ENCODE measurements at regions of chr12 and their contacts with region 1.

Region 1: GRCh38 chr12:50074936-50075807 is 10.0 kb upstream of the SMARCD1 start:
- DNase-seq: peak; percentile 67 to 77 (median 72)
- H3K4me3 ChIP-seq: no peak overlapping the region
- H3K4me3 Mint-ChIP-seq: no peak overlapping the region
- H3K27ac ChIP-seq: no peak overlapping the region
- H3K27ac Mint-ChIP-seq: peak overlapping the region in 2 of 7 donors; percentile 64 to 79
- H3K4me1 ChIP-seq: peaks cover 3% of the 10 kb centered on the region
- H3K4me1 Mint-ChIP-seq: peaks cover 5 to 11% (median 7%) of the 10 kb centered on the region in 4 donors
- H3K27me3 ChIP-seq: no peaks in the 10 kb centered on the region
- H3K27me3 Mint-ChIP-seq: peaks cover 0 to 5% of the 10 kb centered on the region in 2 donors

Region 2: DNA sequence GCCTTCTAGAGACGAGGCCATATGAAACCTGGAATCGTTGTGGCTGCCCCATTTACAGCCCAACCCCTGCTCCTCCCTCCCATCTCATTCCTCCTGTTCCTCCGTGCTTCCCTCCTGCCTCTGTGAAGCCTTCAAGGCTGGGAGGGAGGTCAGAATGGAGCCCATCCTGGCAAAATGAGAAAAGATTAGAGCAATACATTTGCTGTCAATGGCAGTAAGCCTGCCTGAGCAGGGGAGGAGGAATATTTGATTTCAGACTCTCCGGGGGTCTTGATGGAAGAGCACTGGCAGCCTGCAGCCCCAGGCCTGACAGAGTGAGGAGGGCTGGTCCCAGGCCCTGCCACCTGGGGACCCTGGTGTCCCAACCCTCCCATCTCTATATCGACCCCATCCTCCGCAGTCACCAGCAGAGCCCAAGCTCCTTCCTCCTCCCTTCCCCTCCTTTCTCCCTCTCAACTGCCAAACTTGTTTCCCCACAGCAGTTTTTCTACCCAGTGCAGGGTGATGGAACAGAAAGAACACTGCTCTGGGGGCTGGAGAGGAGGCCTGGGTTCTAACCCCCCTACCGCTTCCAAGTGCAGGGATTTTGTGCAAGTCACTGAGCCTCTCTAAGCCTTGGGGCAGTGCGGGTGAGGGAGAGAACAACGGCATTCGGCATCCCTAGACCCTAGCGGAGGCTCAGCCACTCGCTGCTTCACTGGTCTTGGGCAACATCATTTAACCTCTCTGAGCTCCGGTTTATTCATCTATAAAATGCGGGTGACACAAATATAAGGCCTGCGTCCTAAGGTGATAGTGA is 33.9 kb before region 1 on chr12:
- CTCF ChIA-PET with region 1: interaction called, 54 read pairs
- POLR2A ChIA-PET with region 1: no interaction called
- intact Hi-C with region 1: no loop called
- DNase-seq: no peak
- H3K4me3 ChIP-seq: no peak overlapping the region
- H3K4me3 Mint-ChIP-seq: no peak overlapping the region
- H3K27ac ChIP-seq: no peak overlapping the region
- H3K27ac Mint-ChIP-seq: no peak overlapping the region
- H3K4me1 ChIP-seq: no peaks in the 10 kb centered on the region
- H3K4me1 Mint-ChIP-seq: peaks cover 0 to 1% (median 0%) of the 10 kb centered on the region in 4 donors
- H3K27me3 ChIP-seq: no peaks in the 10 kb centered on the region
- H3K27me3 Mint-ChIP-seq: peaks cover 2 to 4% of the 10 kb centered on the region in 2 donors

Region 3: GRCh38 chr12:50055831-50056638 is 19.1 kb before region 1 on chr12:
- CTCF ChIA-PET with region 1: interaction called, 21 read pairs
- POLR2A ChIA-PET with region 1: no interaction called
- intact Hi-C with region 1: no loop called
- DNase-seq: peak; percentile 51 to 60 (median 54)
- H3K4me3 ChIP-seq: peak overlapping the region in 1 of 2 donors; percentile 15
- H3K4me3 Mint-ChIP-seq: peak overlapping the region; percentile 43 to 94 (median 77)
- H3K27ac ChIP-seq: no peak overlapping the region
- H3K27ac Mint-ChIP-seq: no peak overlapping the region
- H3K4me1 ChIP-seq: peaks cover 24% of the 10 kb centered on the region
- H3K4me1 Mint-ChIP-seq: peaks cover 17 to 35% (median 24%) of the 10 kb centered on the region in 4 donors
- H3K27me3 ChIP-seq: peaks cover 22% of the 10 kb centered on the region
- H3K27me3 Mint-ChIP-seq: peaks cover 45 to 61% of the 10 kb centered on the region in 2 donors

Region 4: DNA sequence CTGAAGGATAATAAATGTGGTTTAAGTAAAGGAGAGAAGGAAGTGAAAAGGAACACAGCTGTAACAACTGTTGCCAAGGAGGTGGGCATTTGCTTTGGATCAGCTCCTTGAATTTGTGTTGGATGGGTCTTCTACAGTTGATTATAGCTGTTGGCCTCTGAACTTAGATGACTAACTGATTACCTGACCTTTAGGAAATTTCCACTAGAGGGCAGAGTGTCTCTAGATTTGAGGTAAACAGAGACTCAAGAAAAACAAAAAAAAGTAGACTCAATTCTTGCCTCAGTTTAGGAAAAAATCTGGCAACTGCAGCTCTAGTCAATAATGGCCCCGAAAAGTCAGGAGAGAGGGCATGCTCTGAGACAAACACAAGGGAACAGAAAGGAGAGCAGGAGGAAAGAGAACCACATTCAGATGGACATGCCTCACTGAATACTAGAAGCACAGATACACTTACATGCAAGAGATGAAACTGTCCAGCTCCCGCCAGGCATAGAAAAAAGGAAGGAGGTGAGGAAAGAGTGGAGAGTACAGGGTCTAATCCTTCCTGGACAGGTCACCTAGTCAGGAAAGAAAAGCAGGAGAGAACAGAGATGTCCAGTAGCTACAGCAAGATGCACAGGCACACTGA is 57.4 kb after region 1 on chr12:
- CTCF ChIA-PET with region 1: interaction called, 5 read pairs
- POLR2A ChIA-PET with region 1: no interaction called
- intact Hi-C with region 1: loop called (anchors 5 kb)
- DNase-seq: peak in 4 of 5 donors; percentile 48 to 54 (median 52)
- H3K4me3 ChIP-seq: no peak overlapping the region
- H3K4me3 Mint-ChIP-seq: no peak overlapping the region
- H3K27ac ChIP-seq: no peak overlapping the region
- H3K27ac Mint-ChIP-seq: peak overlapping the region in 6 of 7 donors; percentile 14 to 84 (median 68)
- H3K4me1 ChIP-seq: no peaks in the 10 kb centered on the region
- H3K4me1 Mint-ChIP-seq: peaks cover 12 to 28% (median 13%) of the 10 kb centered on the region in 4 donors
- H3K27me3 ChIP-seq: no peaks in the 10 kb centered on the region
- H3K27me3 Mint-ChIP-seq: no peaks in the 10 kb centered on the region

Region 5: GRCh38 chr12:50174971-50175715 is 100.0 kb after region 1 on chr12:
- CTCF ChIA-PET with region 1: interaction called, 197 read pairs
- POLR2A ChIA-PET with region 1: no interaction called
- intact Hi-C with region 1: loop called (anchors 1 kb)
- DNase-seq: peak; percentile 44 to 71 (median 64)
- H3K4me3 ChIP-seq: no peak overlapping the region
- H3K4me3 Mint-ChIP-seq: no peak overlapping the region
- H3K27ac ChIP-seq: no peak overlapping the region
- H3K27ac Mint-ChIP-seq: peak overlapping the region in 2 of 7 donors; percentile 13 to 49
- H3K4me1 ChIP-seq: no peaks in the 10 kb centered on the region
- H3K4me1 Mint-ChIP-seq: peaks cover 0 to 2% (median 0%) of the 10 kb centered on the region in 4 donors
- H3K27me3 ChIP-seq: no peaks in the 10 kb centered on the region
- H3K27me3 Mint-ChIP-seq: no peaks in the 10 kb centered on the region

Region 6: DNA sequence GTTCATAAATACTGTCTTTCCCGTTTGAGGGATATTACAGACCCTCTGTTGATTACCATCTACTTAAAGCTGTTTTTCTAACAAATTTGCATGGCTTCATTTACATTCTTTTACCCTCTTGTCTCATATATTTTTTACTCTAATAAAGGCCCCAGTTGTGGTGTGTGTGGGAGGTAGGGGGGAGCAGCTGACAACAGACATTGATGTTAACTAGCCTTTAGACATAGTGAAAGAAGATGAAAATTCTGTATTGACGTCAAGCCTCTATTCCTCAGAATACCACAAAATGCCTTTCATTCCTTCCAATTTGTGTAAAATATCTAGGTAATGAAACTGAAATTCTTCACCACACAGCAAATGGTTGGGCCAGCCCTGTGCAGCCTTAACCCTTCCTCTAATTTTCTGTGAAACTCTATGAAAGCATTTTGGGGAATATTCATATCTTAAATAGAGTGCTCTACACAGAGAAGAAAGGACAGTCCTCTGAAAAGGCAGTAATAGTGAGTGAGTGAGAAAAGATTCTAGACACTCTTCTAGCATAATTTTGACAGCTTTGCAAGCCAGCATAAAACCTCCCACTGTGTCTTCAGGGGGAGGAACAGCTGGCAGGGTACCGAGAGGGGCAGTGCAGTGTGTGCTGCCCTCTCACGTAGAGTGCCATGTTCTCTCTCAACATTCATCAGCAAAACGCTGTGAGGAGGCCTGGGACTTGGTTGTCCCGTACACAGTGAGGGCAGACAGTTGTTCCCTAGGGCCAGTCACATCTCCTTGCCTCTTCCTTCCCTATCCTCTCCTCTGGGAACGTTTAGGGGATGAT is 112.1 kb after region 1 on chr12:
- CTCF ChIA-PET with region 1: interaction called, 20 read pairs
- POLR2A ChIA-PET with region 1: no interaction called
- intact Hi-C with region 1: no loop called
- DNase-seq: no peak
- H3K4me3 ChIP-seq: no peak overlapping the region
- H3K4me3 Mint-ChIP-seq: no peak overlapping the region
- H3K27ac ChIP-seq: no peak overlapping the region
- H3K27ac Mint-ChIP-seq: peak overlapping the region in 6 of 7 donors; percentile 14 to 80 (median 54)
- H3K4me1 ChIP-seq: peaks cover 38% of the 10 kb centered on the region
- H3K4me1 Mint-ChIP-seq: peaks cover 14 to 41% (median 23%) of the 10 kb centered on the region in 4 donors
- H3K27me3 ChIP-seq: no peaks in the 10 kb centered on the region
- H3K27me3 Mint-ChIP-seq: no peaks in the 10 kb centered on the region

Region 7: DNA sequence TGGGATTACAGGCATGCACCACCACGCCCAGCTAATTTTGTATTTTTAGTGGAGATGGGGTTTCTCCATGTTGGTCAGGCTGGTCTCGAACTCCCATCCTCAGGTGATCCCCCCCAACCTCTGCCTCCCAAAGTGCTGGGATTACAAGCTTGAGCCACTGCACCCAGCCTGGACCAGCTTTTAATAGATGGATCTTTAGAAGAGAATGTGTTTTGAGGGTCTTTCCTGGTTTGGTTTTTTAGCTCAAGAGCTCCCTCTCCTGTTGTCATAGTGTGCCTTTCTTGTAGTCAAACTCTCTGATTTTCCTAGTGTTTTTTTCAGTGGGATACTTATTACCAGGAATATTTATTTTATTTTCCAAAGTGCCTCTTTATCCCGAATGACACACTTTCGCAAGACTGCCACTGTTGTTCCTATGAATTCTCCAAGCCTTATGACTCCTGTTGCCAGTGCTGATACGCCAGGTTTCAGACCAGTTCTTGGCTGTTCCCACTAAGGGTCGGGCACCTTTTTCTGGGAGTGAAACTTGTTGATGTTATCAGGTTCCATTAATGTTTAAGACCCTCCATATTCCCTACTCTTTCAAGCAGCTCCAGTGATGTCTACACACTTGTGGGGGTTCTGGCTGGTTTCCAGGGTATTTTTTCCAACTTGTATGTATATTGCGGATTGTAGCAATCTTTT is 239.6 kb after region 1 on chr12:
- CTCF ChIA-PET with region 1: interaction called, 3 read pairs
- POLR2A ChIA-PET with region 1: no interaction called
- intact Hi-C with region 1: loop called (anchors 10 kb)
- DNase-seq: peak in 1 of 5 donors; percentile 2
- H3K4me3 ChIP-seq: no peak overlapping the region
- H3K4me3 Mint-ChIP-seq: no peak overlapping the region
- H3K27ac ChIP-seq: no peak overlapping the region
- H3K27ac Mint-ChIP-seq: peak overlapping the region in 1 of 7 donors; percentile 52
- H3K4me1 ChIP-seq: no peaks in the 10 kb centered on the region
- H3K4me1 Mint-ChIP-seq: no peaks in the 10 kb centered on the region
- H3K27me3 ChIP-seq: no peaks in the 10 kb centered on the region
- H3K27me3 Mint-ChIP-seq: no peaks in the 10 kb centered on the region

Measured in CD4-positive, alpha-beta memory T cell (primary cell).